CD8-positive, alpha-beta memory T cell (primary cell): ENCODE measurements at regions of chr4 and their contacts with region 1.

Region 1: GRCh38 chr4:153083447-153083947 is 120.7 kb upstream of the TRIM2 start:
- DNase-seq: peak in 4 of 5 donors; percentile 22 to 59 (median 48)
- H3K4me3 ChIP-seq: no peak overlapping the region
- H3K4me3 Mint-ChIP-seq: peak overlapping the region in 6 of 7 donors; percentile 35 to 76 (median 54)
- H3K27ac ChIP-seq: no peak overlapping the region
- H3K27ac Mint-ChIP-seq: peak overlapping the region in 3 of 8 donors; percentile 43 to 84 (median 71)
- H3K4me1 ChIP-seq: peaks cover 41% of the 10 kb centered on the region
- H3K4me1 Mint-ChIP-seq: peaks cover 22 to 43% (median 30%) of the 10 kb centered on the region in 3 donors
- H3K27me3 ChIP-seq: no peaks in the 10 kb centered on the region
- H3K27me3 Mint-ChIP-seq: peaks cover 10 to 30% of the 10 kb centered on the region in 2 donors

Region 2: GRCh38 chr4:152849350-152849749 is 234.1 kb before region 1 on chr4:
- CTCF ChIA-PET with region 1: interaction called, 12 read pairs
- POLR2A ChIA-PET with region 1: no interaction called
- DNase-seq: no peak
- H3K4me3 ChIP-seq: no peak overlapping the region
- H3K4me3 Mint-ChIP-seq: no peak overlapping the region
- H3K27ac ChIP-seq: no peak overlapping the region
- H3K27ac Mint-ChIP-seq: peak overlapping the region in 3 of 8 donors; percentile 4 to 74 (median 20)
- H3K4me1 ChIP-seq: peaks cover 12% of the 10 kb centered on the region
- H3K4me1 Mint-ChIP-seq: peaks cover 14 to 28% (median 19%) of the 10 kb centered on the region in 3 donors
- H3K27me3 ChIP-seq: no peaks in the 10 kb centered on the region
- H3K27me3 Mint-ChIP-seq: peaks cover 0 to 1% of the 10 kb centered on the region in 2 donors

Region 3: GRCh38 chr4:153023681-153024394 is 59.7 kb before region 1 on chr4:
- CTCF ChIA-PET with region 1: no interaction called
- POLR2A ChIA-PET with region 1: no interaction called
- DNase-seq: no peak
- H3K4me3 ChIP-seq: no peak overlapping the region
- H3K4me3 Mint-ChIP-seq: no peak overlapping the region
- H3K27ac ChIP-seq: no peak overlapping the region
- H3K27ac Mint-ChIP-seq: no peak overlapping the region
- H3K4me1 ChIP-seq: no peaks in the 10 kb centered on the region
- H3K4me1 Mint-ChIP-seq: no peaks in the 10 kb centered on the region
- H3K27me3 ChIP-seq: no peaks in the 10 kb centered on the region
- H3K27me3 Mint-ChIP-seq: peaks cover 8 to 37% of the 10 kb centered on the region in 2 donors

Region 4: GRCh38 chr4:153095448-153096204 is 12.1 kb after region 1 on chr4:
- CTCF ChIA-PET with region 1: interaction called, 12 read pairs
- POLR2A ChIA-PET with region 1: no interaction called
- DNase-seq: no peak
- H3K4me3 ChIP-seq: no peak overlapping the region
- H3K4me3 Mint-ChIP-seq: no peak overlapping the region
- H3K27ac ChIP-seq: no peak overlapping the region
- H3K27ac Mint-ChIP-seq: peak overlapping the region in 1 of 8 donors; percentile 56
- H3K4me1 ChIP-seq: peaks cover 5% of the 10 kb centered on the region
- H3K4me1 Mint-ChIP-seq: peaks cover 3 to 11% (median 4%) of the 10 kb centered on the region in 3 donors
- H3K27me3 ChIP-seq: no peaks in the 10 kb centered on the region
- H3K27me3 Mint-ChIP-seq: peaks cover 0 to 2% of the 10 kb centered on the region in 2 donors

Region 5: DNA sequence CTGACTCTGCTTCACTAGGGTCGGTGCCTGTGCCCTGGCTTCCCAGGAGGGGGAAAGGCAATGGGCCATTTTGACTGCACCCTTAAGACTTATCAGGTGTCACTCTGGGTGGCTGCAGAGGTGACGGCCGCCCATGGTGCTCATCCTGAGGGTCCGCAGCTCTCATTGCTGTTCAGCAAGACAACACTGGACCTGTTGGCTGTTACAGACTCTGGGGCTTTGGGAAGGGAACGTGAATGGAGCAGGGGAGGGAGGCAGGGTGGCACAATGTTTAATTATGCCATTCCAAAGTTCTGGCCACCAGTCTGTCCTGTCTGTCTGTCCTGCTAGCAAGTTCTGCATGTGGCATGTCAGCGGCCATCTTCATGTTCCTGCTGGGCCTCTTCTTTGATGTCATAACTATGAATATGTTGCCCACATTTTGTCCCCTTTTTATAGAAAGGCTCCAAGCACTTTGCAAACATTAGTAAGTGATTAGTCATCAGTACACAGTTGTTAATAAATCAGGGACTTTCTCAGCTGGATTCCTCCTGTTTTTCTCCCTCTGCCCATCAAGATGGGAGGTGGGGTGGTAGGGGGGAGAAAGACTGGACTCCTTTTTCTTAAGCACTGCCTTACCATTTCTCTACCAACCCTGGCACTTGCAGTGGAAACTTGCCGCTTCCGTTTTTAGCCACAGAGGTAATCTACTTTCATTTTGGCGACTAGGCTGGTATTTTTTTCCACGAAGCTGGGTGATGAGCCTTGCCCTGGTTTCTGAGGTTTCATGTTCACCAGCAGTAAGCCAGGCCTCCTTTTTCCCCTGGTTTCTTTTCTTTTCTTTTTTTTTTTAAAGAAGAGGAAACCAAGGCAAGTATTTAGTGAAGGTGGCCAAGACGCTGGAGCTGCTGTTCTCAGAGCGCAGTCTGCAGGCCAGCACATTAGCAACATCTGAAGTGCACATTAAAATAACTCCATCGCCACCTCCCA is 32.1 kb after region 1 on chr4:
- CTCF ChIA-PET with region 1: interaction called, 236 read pairs
- POLR2A ChIA-PET with region 1: interaction called, 3 read pairs
- DNase-seq: peak; percentile 42 to 90 (median 82)
- H3K4me3 ChIP-seq: peak overlapping the region; percentile 45
- H3K4me3 Mint-ChIP-seq: peak overlapping the region in 3 of 7 donors; percentile 29 to 89 (median 76)
- H3K27ac ChIP-seq: peak overlapping the region; percentile 22
- H3K27ac Mint-ChIP-seq: peak overlapping the region in 1 of 8 donors; percentile 93
- H3K4me1 ChIP-seq: peaks cover 61% of the 10 kb centered on the region
- H3K4me1 Mint-ChIP-seq: peaks cover 0 to 6% (median 1%) of the 10 kb centered on the region in 3 donors
- H3K27me3 ChIP-seq: no peaks in the 10 kb centered on the region
- H3K27me3 Mint-ChIP-seq: no peaks in the 10 kb centered on the region

Region 6: DNA sequence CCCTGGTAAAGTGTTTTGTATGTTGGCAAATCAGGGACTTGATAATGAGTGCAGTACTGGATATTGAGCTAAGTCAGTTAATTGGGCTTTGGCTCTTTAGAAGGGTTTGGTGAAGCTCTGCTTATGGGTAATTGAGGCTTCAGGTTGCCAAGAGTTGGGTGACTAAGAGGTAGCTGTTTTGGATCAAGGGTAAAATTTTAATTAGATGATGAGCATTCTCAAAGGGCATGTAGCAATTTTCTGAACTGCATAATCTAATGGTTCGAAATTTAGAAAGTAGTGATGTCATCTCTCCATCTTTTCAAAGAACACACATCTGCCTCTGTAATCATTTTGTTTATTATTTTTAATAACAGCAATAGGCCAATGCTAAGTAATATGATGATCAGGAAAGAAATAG is 115.2 kb after region 1 on chr4:
- CTCF ChIA-PET with region 1: no interaction called
- POLR2A ChIA-PET with region 1: no interaction called
- DNase-seq: no peak
- H3K4me3 ChIP-seq: no peak overlapping the region
- H3K4me3 Mint-ChIP-seq: no peak overlapping the region
- H3K27ac ChIP-seq: no peak overlapping the region
- H3K27ac Mint-ChIP-seq: no peak overlapping the region
- H3K4me1 ChIP-seq: no peaks in the 10 kb centered on the region
- H3K4me1 Mint-ChIP-seq: no peaks in the 10 kb centered on the region
- H3K27me3 ChIP-seq: no peaks in the 10 kb centered on the region
- H3K27me3 Mint-ChIP-seq: peaks cover 0 to 7% of the 10 kb centered on the region in 2 donors

Region 7: DNA sequence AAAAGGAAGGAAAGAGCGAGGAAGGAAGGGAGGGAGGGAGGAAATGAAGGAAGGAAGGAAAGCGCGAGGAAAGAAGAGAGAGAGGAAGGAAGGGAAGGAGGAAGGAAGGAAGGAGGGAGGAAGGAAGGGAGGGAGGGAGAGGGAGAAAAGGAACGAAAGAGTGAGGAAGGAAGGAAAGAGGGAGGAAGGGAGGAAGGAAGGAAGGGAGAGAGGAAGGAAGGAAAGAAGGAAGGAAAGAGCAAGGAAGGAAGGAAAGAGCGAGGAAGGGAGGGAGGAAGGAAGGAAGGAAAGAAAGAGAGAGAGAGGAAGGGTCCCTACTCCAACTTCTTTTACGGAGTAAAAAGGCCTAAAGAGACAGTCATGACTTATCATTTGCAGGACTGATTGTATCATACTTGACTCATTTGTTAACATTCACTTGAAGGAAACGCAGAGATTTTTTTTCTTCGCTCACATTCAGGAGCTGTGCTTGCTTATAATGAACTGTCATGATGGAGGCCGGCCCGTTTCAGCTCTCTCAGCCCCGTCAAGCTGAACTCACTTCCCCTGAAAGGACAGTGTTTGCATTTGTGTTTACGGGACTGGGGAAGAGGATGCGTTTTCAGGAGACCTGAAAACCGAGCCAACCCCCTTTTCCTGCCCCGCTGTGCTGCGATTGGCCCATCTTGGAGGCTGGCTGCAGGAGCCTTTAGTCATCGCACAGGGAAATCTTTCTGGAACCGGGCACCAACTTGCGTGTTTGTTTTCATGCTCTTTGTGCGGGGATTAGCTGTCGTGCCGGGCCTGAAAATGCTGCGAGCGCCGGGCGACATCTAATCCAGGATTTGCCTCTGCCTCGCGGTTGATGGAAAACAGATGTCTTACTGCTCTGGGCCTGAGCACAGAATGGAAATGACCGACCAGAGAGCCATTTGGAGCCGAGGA is 138.5 kb after region 1 on chr4:
- CTCF ChIA-PET with region 1: no interaction called
- POLR2A ChIA-PET with region 1: no interaction called
- DNase-seq: peak in 4 of 5 donors; percentile 6 to 48 (median 26)
- H3K4me3 ChIP-seq: peak overlapping the region; percentile 54
- H3K4me3 Mint-ChIP-seq: peak overlapping the region; percentile 82 to 94 (median 89)
- H3K27ac ChIP-seq: no peak overlapping the region
- H3K27ac Mint-ChIP-seq: peak overlapping the region in 5 of 8 donors; percentile 50 to 86 (median 70)
- H3K4me1 ChIP-seq: peaks cover 17% of the 10 kb centered on the region
- H3K4me1 Mint-ChIP-seq: peaks cover 22 to 35% (median 34%) of the 10 kb centered on the region in 3 donors
- H3K27me3 ChIP-seq: no peaks in the 10 kb centered on the region
- H3K27me3 Mint-ChIP-seq: peaks cover 17 to 55% of the 10 kb centered on the region in 2 donors